Endothelial cell of umbilical vein (primary cell): ENCODE measurements at regions of chr20 and their contacts with region 1.

Region 1: GRCh38 chr20:45373353-45374100 is 4.6 kb downstream of the TP53TG5 start:
- DNase-seq: peak; percentile 84
- H3K4me3 ChIP-seq: peak overlapping the region; percentile 17 to 48 (median 30)
- H3K27ac ChIP-seq: no peak overlapping the region
- H3K4me1 ChIP-seq: peaks cover 7% of the 10 kb centered on the region
- H3K27me3 ChIP-seq: no peaks in the 10 kb centered on the region
- CTCF ChIP-seq: peak; percentile 85 to 96
- POLR2A ChIP-seq: no peak

Region 2: DNA sequence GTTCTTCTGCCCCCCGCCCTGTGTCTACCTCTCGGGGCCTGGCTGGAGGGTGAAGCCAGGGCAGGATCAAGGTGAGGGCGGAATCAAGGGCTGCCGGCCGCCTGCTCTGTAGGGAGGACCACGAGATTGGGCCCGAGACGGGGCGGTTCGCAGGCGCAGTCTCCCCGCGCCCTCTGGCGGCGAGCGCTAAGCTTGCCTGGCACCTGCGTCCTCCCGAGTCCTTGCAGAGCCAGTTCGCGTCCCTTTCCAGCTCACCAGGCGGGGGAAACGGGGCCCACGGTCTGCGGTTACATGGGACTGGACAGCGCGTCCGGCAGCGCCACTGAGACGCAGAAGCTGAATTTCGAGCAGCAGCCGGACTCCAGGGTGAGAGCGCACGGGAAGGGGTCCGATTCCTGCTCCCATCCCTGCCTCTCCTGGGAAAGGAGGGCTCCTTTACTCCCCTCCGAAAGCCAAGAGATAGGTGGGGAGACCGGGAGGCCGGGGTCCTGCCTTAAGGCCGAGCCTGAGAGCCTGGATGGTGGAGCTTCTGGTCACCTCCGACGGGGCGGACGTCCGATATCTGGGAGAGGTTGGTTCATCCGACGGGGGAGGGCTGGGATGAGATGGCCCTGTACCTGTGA is 61.8 kb before region 1 on chr20:
- CTCF ChIA-PET with region 1: interaction called, 47 read pairs
- POLR2A ChIA-PET with region 1: no interaction called
- dilution Hi-C with region 1: no loop called
- intact Hi-C with region 1: no loop called
- DNase-seq: peak; percentile 37
- H3K4me3 ChIP-seq: no peak overlapping the region
- H3K27ac ChIP-seq: no peak overlapping the region
- H3K4me1 ChIP-seq: no peaks in the 10 kb centered on the region
- H3K27me3 ChIP-seq: peaks cover 18 to 21% of the 10 kb centered on the region in 2 experiments
- CTCF ChIP-seq: peak; percentile 84 to 97
- POLR2A ChIP-seq: no peak

Region 3: DNA sequence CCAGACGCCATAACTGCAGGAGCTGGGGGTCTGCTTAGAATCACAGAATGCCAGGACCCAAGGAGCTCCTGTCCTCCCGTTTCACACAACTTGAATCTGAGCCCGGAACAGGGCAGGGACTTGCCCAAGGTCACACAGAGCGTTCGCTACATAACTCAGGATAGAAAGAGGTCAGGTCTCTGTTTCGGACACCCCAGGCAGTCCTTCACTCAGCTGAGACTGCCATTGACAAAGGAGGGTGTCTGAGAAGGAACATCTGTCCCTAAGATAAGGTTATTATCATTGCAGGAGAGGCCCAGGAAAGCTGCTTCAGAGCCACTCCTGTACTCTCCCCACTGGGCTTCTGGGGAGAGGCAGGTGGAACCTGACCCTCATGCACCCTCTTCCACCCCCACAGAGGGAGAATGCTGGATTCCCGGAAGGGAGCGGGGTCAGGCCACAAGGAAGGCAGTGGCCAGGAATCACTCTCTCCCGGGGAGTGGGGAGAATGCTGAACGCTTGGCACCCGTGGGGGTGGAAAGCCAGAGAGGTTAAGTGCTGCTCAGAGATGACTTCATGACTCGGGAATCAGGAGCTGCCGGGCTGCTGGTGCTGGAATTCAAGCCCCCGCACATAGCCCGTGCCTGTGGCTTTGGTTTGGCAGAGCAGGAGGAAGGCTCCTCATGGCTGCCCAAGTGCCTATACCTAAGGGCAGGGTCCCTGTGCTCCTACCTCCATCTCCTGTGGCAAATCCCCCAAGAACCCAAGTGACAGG is 36.0 kb before region 1 on chr20:
- CTCF ChIA-PET with region 1: interaction called, 22 read pairs
- POLR2A ChIA-PET with region 1: no interaction called
- dilution Hi-C with region 1: no loop called
- intact Hi-C with region 1: no loop called
- DNase-seq: no peak
- H3K4me3 ChIP-seq: no peak overlapping the region
- H3K27ac ChIP-seq: peak overlapping the region; percentile 12
- H3K4me1 ChIP-seq: peaks cover 27% of the 10 kb centered on the region
- H3K27me3 ChIP-seq: no peaks in the 10 kb centered on the region
- CTCF ChIP-seq: no peak
- POLR2A ChIP-seq: no peak

Region 4: GRCh38 chr20:45362804-45363610 is 10.5 kb before region 1 on chr20 and contains the start of gene SYS1:
- CTCF ChIA-PET with region 1: interaction called, 96 read pairs
- POLR2A ChIA-PET with region 1: interaction called, 8 read pairs
- dilution Hi-C with region 1: no loop called
- intact Hi-C with region 1: loop called (anchors 1 kb)
- DNase-seq: peak; percentile 99
- H3K4me3 ChIP-seq: peak within 1 kb of the TSS; percentile 34 to 56 (median 52)
- H3K27ac ChIP-seq: peak within 1 kb of the TSS; percentile 83
- H3K4me1 ChIP-seq: peaks cover 35% of the 10 kb centered on the region
- H3K27me3 ChIP-seq: no peaks in the 10 kb centered on the region
- CTCF ChIP-seq: peak; percentile 77 to 88
- POLR2A ChIP-seq: peak; percentile 88
- total RNA-seq, gene SYS1: 22.3 and 27.4 TPM in 2 replicates

Region 5: DNA sequence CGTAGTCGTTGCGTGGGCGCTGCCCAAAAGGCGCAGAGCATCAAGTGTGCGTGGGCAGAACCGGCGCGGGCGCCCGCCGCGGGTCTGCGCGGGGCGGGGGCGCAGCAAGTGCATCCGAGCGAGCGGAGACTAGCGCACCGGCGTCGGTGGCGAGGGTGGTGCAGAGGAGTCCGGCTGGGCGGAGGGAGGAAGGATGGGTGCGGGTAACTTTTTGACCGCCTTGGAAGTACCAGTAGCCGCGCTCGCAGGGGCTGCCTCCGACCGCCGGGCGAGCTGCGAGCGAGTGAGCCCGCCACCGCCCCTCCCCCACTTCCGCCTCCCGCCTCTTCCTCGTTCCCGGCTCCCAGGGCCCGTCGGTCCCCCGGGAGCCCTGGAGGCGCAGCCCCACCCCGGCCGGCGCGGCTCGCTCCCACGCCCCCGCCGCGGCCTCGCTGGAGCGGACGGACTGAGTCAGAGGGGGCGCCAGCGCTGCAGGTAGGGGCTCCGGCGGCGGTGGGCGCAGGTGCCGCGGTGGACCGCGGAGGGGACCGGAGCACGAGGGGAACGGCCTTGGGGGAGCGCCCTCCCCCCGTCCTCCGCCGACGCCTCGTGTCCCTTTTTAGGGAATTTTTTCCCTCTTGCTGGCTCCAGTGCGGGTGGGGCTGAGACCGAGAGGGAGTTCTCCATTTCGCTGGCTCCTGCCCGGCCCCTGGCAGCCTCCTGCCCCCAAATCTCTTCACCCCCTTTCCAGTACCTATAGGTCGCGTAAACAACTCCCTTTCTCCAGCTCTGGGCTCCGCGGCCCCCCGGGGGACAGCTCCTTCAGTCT is 32.9 kb after region 1 on chr20:
- CTCF ChIA-PET with region 1: interaction called, 32 read pairs
- POLR2A ChIA-PET with region 1: no interaction called
- dilution Hi-C with region 1: no loop called
- intact Hi-C with region 1: no loop called
- DNase-seq: peak; percentile 35
- H3K4me3 ChIP-seq: peak overlapping the region; percentile 7 to 85 (median 36)
- H3K27ac ChIP-seq: no peak overlapping the region
- H3K4me1 ChIP-seq: peaks cover 3% of the 10 kb centered on the region
- H3K27me3 ChIP-seq: peaks cover 6% of the 10 kb centered on the region in 2 experiments
- CTCF ChIP-seq: no peak
- POLR2A ChIP-seq: no peak

Region 6: DNA sequence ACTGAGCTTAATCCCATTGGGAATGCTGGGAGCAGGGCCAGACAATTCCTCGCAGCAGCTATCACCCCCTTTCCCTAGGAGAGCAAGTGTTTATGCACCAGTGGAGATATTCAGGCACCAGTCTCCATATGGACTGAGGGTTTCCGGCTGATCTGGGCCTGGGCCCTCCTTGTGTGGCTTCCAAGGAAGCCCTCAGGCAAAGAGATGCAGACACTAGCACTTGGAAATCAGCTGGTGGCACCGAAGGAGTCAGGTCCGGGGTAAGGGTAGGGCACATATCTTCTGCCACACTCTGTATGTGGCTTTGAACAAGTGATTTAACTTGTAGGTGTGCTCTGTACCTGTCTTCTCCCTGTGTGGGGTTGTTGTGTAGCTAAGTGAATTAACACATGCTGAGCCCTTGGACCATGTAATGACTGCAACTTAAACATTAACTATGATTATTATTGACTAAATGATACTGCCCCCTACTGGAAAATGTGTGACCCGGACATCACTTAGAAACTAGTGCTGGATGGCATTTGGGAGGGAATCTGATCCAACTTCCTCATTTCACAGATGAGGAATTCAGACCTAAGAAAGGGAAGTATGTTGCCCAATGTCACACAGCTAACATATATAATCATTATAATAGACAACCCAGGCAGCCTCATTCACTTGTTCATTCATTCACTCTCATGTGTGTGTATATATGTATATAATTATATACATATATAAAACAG is 76.7 kb after region 1 on chr20:
- CTCF ChIA-PET with region 1: interaction called, 41 read pairs
- POLR2A ChIA-PET with region 1: no interaction called
- dilution Hi-C with region 1: no loop called
- intact Hi-C with region 1: no loop called
- DNase-seq: peak; percentile 54
- H3K4me3 ChIP-seq: no peak overlapping the region
- H3K27ac ChIP-seq: no peak overlapping the region
- H3K4me1 ChIP-seq: no peaks in the 10 kb centered on the region
- H3K27me3 ChIP-seq: peaks cover 0 to 3% of the 10 kb centered on the region in 2 experiments
- CTCF ChIP-seq: peak; percentile 48 to 56
- POLR2A ChIP-seq: no peak

Region 7: DNA sequence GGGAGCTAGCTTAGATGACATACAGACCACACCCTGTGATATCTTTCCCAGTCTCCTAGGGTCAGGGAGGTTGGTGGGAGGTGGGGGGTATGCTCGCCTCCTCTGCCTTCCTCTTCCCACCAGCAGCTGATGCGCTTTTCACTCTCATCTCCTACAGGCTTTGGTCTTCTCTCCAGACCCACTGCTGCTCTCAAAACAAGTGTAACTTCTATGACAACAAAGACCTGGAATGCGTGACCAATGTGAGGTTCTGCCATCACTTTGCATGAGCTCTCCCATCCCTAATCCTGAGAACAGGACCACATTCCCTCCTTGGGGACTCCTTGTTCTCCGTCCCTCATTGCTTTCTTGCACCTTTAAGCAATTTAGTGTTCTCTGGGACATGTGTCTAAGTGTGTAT is 520.3 kb after region 1 on chr20:
- CTCF ChIA-PET with region 1: no interaction called
- POLR2A ChIA-PET with region 1: no interaction called
- dilution Hi-C with region 1: no loop called
- intact Hi-C with region 1: no loop called
- DNase-seq: no peak
- H3K4me3 ChIP-seq: no peak overlapping the region
- H3K27ac ChIP-seq: no peak overlapping the region
- H3K4me1 ChIP-seq: peaks cover 22% of the 10 kb centered on the region
- H3K27me3 ChIP-seq: no peaks in the 10 kb centered on the region
- CTCF ChIP-seq: no peak
- POLR2A ChIP-seq: no peak